Activated CD4-positive, alpha-beta T cell treated with anti-CD3 and anti-CD28 coated beads for 36 hours (primary cell): ENCODE measurements at regions of chr20 and their contacts with region 1.

Region 1: DNA sequence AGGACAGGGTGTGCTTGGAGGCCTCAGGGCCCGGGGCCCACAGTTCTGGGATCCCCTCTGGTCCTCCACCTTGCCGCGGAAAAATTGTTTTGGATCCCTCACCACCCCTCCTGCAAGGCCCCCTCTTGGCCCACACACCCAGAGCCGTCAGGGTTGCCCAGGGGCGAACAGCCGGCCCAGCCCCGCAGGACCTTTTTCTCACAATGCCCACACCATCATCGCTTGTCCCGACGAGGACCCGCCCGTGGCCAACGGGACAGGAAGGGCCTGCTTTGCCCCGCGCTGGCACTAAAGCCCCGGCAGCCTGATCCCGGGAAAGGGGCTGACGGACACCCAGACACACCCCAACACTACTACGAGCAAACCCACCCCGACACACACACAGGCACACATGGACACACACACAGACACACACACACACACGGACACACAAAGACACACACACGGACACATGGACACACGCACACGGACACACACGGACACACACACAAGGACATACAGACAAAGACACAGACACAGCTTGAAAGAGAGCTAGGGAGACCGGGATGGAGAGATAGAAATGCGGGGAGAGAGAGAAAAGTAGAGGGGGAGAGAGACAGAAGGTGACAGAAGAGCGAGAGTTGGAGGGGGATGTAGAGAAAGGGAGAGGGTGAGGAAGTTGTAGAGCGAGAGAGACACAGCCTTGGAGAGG is 1493.5 kb upstream of the DEFB115 start:
- DNase-seq: no peak
- ATAC-seq: no peak
- H3K4me3 Mint-ChIP-seq: no peak overlapping the region
- H3K27ac Mint-ChIP-seq: no peak overlapping the region
- H3K4me1 Mint-ChIP-seq: no peaks in the 10 kb centered on the region
- H3K27me3 Mint-ChIP-seq: peaks cover 3% of the 10 kb centered on the region

Region 2: GRCh38 chr20:29443819-29444218 is 320.1 kb before region 1 on chr20:
- CTCF ChIA-PET with region 1: no interaction called
- POLR2A ChIA-PET with region 1: no interaction called
- intact Hi-C with region 1: loop called in 1 of 2 experiments (anchors 1 kb)
- DNase-seq: no peak
- ATAC-seq: no peak
- H3K4me3 Mint-ChIP-seq: no peak overlapping the region
- H3K27ac Mint-ChIP-seq: no peak overlapping the region
- H3K4me1 Mint-ChIP-seq: peaks cover 4% of the 10 kb centered on the region
- H3K27me3 Mint-ChIP-seq: no peaks in the 10 kb centered on the region